PC-9 (cell line): ENCODE measurements at regions of chr6 and their contacts with region 1.

Region 1: GRCh38 chr6:44932651-44933091 is 395.5 kb upstream of the RUNX2 start:
- DNase-seq: no peak
- H3K4me3 ChIP-seq: no peak overlapping the region
- H3K27ac ChIP-seq: no peak overlapping the region
- H3K4me1 ChIP-seq: no peaks in the 10 kb centered on the region
- H3K27me3 ChIP-seq: no peaks in the 10 kb centered on the region
- CTCF ChIP-seq: no peak

Region 2: GRCh38 chr6:44415873-44416502 is 516.7 kb before region 1 on chr6:
- CTCF ChIA-PET with region 1: no interaction called
- POLR2A ChIA-PET with region 1: no interaction called
- intact Hi-C with region 1: no loop called
- DNase-seq: peak; percentile 3 to 42
- H3K4me3 ChIP-seq: no peak overlapping the region
- H3K27ac ChIP-seq: no peak overlapping the region
- H3K4me1 ChIP-seq: peaks cover 14% of the 10 kb centered on the region; the same call in 1 of the 2 replicates
- H3K27me3 ChIP-seq: no peaks in the 10 kb centered on the region
- CTCF ChIP-seq: no peak

Region 3: DNA sequence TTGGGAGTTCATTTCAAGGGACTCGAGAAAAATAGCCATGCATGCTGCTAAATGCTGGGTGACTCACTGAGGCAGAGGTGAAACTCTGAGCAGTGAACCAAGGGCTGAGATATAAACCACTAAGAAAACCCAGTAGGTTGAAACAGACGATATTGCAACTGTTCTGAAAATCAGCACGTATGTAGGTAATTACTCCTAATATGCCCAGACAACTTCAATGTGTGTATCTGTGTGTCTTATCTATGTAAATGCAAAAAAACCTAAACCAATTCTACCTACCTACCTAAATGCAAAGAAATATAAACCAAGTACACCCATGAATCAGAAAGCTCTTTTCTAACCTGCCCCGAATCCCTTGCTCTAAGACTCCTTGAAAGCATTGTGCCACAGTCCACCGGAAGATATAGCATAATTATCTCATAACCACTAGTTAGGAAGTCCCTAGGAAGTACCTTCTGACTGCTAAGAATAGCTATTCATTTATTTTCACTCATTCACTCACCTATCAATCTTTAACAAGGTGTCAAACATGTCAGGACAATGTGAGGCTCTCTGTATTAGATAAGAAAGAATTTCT is 63.3 kb before region 1 on chr6:
- CTCF ChIA-PET with region 1: no interaction called
- POLR2A ChIA-PET with region 1: no interaction called
- intact Hi-C with region 1: no loop called
- DNase-seq: no peak
- H3K4me3 ChIP-seq: no peak overlapping the region
- H3K27ac ChIP-seq: no peak overlapping the region
- H3K4me1 ChIP-seq: no peaks in the 10 kb centered on the region
- H3K27me3 ChIP-seq: no peaks in the 10 kb centered on the region
- CTCF ChIP-seq: no peak

Region 4: DNA sequence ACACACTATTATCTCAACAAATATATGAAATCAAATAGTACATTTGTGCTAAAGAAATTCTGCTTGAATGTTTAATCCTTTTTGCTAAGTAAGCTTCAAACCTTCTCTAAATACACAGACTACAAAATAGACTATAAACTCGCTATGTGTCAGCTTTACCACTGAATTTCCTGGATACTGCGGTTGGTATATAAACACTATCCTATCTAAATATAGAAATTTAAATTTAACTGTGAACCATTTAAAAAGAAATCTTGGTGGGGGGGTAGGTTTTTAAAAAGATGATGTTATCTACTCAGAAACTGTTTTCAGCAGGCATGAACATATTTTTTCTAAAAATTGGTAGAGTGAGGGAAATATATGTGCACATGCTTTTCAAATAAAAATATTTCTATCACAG is 89.0 kb after region 1 on chr6:
- CTCF ChIA-PET with region 1: no interaction called
- POLR2A ChIA-PET with region 1: no interaction called
- intact Hi-C with region 1: no loop called
- DNase-seq: no peak
- H3K4me3 ChIP-seq: no peak overlapping the region
- H3K27ac ChIP-seq: no peak overlapping the region
- H3K4me1 ChIP-seq: no peaks in the 10 kb centered on the region
- H3K27me3 ChIP-seq: no peaks in the 10 kb centered on the region
- CTCF ChIP-seq: no peak

Region 5: GRCh38 chr6:45253453-45253852 is 320.8 kb after region 1 on chr6:
- CTCF ChIA-PET with region 1: no interaction called
- POLR2A ChIA-PET with region 1: interaction called, 12 read pairs
- intact Hi-C with region 1: no loop called
- DNase-seq: no peak
- H3K4me3 ChIP-seq: no peak overlapping the region
- H3K27ac ChIP-seq: no peak overlapping the region
- H3K4me1 ChIP-seq: no peaks in the 10 kb centered on the region
- H3K27me3 ChIP-seq: no peaks in the 10 kb centered on the region
- CTCF ChIP-seq: no peak